ENCODE measurements at regions of chr3 and their contacts with region 1.

Region 1: DNA sequence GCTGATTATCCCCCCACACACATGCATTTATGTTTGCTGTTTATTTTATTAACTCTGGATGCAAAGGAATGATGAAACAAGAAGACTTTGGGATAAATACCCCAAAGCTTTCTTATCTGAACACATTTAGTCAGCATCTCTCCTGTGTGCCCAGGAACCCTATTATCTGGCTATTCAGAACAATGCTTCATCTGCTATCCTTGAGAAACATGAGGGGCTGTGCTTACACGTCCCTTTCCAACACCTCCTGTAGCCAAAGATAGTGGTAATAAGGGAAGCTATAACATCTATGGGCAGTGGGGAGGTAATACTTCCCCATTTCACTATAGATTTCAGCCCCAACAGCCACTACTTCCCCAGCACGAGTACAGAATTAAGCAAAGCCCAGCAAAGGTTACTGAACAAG is 94.7 kb downstream of the SSR3 start:
- DNase-seq: no peak
- H3K4me3 Mint-ChIP-seq: no peak overlapping the region
- H3K27ac Mint-ChIP-seq: no peak overlapping the region
- H3K4me1 Mint-ChIP-seq: no peaks in the 10 kb centered on the region
- H3K27me3 Mint-ChIP-seq: peaks cover 15% of the 10 kb centered on the region

Region 2: DNA sequence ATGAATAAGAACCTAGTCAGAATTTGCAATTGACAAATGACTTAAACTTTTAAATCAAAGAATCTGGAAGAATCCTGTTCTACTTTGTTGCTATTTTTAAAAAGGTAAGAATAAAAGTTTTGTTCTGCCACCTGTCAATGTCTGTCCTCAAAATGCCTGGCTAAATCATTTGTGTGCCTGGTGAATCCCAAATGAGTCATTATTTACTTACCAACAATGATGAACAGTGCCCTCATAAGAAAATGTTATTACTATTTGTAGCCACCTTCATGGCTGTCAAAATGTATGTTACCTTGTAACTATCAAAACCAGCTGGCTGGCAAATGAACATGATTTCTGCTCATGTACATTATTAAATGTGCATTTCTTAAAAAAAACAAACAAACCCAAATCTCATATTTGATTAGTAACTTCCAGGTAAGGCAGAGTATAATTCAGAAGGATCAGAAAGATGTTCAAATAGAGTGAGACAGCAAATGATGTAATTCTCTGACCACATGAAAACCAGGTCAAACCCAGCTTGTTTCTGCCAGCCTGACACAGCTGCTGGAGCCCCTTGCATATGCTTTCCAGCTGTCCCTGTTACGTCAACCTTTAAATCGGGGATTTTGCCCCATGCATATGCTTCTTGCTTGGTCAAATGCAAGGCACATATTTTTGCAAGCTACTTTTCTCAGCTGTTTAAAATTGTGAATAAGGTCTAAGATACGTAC is 43.2 kb before region 1 on chr3:
- CTCF ChIA-PET with region 1: no interaction called
- DNase-seq: no peak
- H3K4me3 Mint-ChIP-seq: no peak overlapping the region
- H3K27ac Mint-ChIP-seq: no peak overlapping the region
- H3K4me1 Mint-ChIP-seq: no peaks in the 10 kb centered on the region
- H3K27me3 Mint-ChIP-seq: peaks cover 12% of the 10 kb centered on the region

Region 3: GRCh38 chr3:156449712-156450574 is 10.3 kb before region 1 on chr3:
- CTCF ChIA-PET with region 1: interaction called, 27 read pairs
- DNase-seq: no peak
- H3K4me3 Mint-ChIP-seq: no peak overlapping the region
- H3K27ac Mint-ChIP-seq: no peak overlapping the region
- H3K4me1 Mint-ChIP-seq: no peaks in the 10 kb centered on the region
- H3K27me3 Mint-ChIP-seq: peaks cover 22% of the 10 kb centered on the region

Region 4: DNA sequence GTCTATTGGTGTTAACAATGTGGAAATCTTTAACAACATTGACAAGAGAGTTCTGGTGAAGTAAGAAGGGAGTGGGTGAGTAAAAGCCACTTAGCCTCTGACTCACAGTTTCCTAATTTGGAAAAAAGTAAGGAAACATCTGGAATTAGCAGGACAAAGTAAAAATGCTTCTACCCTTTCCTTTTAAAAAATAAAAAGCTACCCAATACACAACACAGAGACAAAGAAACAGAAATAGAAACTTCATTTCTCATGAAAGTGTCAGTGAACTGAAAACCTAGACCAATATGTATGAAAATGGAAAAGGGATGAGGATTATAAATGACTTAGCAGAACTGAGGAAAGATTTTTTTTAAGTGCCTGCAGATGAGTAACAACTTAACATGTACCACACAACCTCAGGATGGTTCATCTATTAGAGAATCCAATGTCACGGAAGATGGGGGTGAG is 29.3 kb after region 1 on chr3:
- CTCF ChIA-PET with region 1: no interaction called
- DNase-seq: no peak
- H3K4me3 Mint-ChIP-seq: no peak overlapping the region
- H3K27ac Mint-ChIP-seq: no peak overlapping the region
- H3K4me1 Mint-ChIP-seq: peaks cover 11% of the 10 kb centered on the region
- H3K27me3 Mint-ChIP-seq: peaks cover 10% of the 10 kb centered on the region